GM23248 (cell line): ENCODE measurements at regions of chrX and their contacts with region 1.

Region 1: DNA sequence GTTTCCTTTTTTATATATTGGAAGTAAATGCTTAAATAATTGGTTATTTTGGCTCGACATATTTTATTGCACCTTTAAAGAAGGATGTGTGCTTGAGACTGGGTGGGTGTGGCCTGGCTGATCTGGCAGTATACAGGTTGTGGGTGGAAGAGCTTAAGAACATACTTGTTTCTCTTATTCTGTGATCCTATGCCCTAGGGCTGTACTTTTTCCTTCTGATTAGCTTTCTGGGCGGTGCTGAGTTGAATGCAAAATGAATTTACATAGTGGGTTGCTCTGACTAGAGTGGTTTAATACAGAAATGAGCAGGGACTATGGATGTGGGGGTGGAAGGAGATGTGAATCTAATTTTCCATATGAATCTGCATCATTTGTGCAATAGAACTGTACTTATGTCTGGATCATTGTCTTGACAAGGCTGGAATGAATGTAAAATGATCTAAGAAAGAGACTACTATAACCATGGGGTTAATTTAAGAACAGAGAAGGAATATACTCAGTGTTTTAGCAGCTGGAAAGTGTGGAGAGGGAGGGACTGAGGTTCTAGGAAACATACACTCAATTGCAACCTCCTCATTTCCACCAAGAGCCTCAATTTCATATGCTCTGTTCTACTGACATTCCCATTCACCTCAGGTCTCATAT is 73.7 kb downstream of the RLIM start:
- DNase-seq: no peak
- H3K4me3 ChIP-seq: no peak overlapping the region
- H3K27ac ChIP-seq: no peak overlapping the region
- H3K4me1 ChIP-seq: 0 out of 2 replicates have a peak, but pooled peaks cover 2% of the 10 kb centered on the region
- H3K27me3 ChIP-seq: no peaks in the 10 kb centered on the region

Region 2: DNA sequence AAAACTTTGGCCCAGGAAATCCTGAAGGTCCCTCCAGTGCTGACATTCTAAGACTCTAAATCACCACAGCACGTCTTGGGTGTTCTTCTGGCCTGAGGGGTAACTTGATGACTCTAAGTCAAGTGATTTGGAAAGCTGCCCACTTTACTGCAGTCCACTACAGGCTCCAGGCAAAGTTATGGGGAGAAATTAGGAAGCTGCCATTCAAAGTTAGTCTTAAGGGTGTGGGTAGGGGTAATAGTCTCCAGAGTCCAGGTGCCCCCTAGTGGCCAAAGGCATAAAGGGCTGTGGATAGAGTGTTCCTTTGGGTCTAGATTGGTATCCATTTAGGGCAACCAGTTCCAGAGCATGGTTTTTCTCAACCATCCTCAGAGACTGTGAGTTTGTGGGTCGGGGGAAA is 158.1 kb before region 1 on chrX:
- in situ Hi-C with region 1: loop called (anchors 10 kb)
- DNase-seq: peak; percentile 69
- H3K4me3 ChIP-seq: no peak overlapping the region
- H3K27ac ChIP-seq: no peak overlapping the region
- H3K4me1 ChIP-seq: no peaks in the 10 kb centered on the region
- H3K27me3 ChIP-seq: no peaks in the 10 kb centered on the region

Region 3: GRCh38 chrX:75603833-75604232 is 1063.1 kb after region 1 on chrX:
- in situ Hi-C with region 1: no loop called
- DNase-seq: peak; percentile 40
- H3K4me3 ChIP-seq: no peak overlapping the region
- H3K27ac ChIP-seq: no peak overlapping the region
- H3K4me1 ChIP-seq: no peaks in the 10 kb centered on the region
- H3K27me3 ChIP-seq: no peaks in the 10 kb centered on the region